ENCODE measurements at regions of chr1 and their contacts with region 1.

Region 1: GRCh38 chr1:112011215-112011614 is 21.7 kb upstream of the KCND3 start:
- DNase-seq: peak; percentile 76
- H3K4me3 ChIP-seq: no peak overlapping the region
- H3K27ac ChIP-seq: no peak overlapping the region
- H3K4me1 ChIP-seq: peaks cover 0 to 28% (median 12%) of the 10 kb centered on the region in 4 donors
- H3K27me3 ChIP-seq: no peaks in the 10 kb centered on the region
- CTCF ChIP-seq: no peak
- EP300 ChIP-seq: no peak
- POLR2A ChIP-seq: no peak

Region 2: DNA sequence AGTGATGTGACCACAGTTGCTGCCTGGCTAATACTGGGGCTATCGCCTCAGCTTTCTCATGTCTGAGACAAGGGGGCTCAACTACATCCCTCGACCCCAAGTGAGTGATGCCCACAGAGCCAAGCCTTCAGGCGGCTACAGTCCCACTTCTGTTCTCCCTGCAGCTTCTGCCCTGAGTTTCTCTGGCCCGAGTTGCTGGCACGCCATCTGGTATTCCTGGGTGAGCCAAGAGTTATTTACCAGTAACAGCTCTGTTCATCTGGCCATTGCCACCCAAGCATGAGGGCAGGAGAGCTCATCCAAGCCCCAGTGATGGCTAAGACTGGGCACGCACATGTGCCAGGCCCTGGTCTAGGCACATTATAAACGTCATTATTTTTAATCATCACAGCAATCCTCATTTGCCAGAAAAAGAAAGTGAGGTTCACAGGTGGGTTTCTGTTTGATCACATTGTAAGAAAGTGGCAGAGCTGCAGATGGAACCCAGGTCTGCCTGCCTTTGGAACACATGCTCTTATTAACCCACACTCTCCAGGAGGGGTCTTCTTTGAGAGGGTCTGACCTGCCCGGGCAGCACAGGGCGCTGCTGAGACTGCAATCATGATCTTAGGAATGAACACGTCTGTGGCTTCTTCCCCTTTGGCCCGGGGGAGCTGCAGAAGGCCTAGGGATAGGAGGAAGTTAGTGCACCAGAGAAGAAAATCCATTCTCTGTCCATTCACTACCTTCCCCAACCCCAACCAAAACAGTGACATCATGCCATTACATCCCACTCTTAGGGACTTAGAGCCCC is 49.2 kb before region 1 on chr1:
- intact Hi-C with region 1: loop called (anchors 1 kb)
- DNase-seq: no peak
- H3K4me3 ChIP-seq: no peak overlapping the region
- H3K27ac ChIP-seq: peak overlapping the region in 2 of 4 donors; percentile 23 to 43
- H3K4me1 ChIP-seq: peaks cover 0 to 53% (median 34%) of the 10 kb centered on the region in 4 donors
- H3K27me3 ChIP-seq: no peaks in the 10 kb centered on the region
- CTCF ChIP-seq: no peak
- EP300 ChIP-seq: no peak
- POLR2A ChIP-seq: no peak

Region 3: DNA sequence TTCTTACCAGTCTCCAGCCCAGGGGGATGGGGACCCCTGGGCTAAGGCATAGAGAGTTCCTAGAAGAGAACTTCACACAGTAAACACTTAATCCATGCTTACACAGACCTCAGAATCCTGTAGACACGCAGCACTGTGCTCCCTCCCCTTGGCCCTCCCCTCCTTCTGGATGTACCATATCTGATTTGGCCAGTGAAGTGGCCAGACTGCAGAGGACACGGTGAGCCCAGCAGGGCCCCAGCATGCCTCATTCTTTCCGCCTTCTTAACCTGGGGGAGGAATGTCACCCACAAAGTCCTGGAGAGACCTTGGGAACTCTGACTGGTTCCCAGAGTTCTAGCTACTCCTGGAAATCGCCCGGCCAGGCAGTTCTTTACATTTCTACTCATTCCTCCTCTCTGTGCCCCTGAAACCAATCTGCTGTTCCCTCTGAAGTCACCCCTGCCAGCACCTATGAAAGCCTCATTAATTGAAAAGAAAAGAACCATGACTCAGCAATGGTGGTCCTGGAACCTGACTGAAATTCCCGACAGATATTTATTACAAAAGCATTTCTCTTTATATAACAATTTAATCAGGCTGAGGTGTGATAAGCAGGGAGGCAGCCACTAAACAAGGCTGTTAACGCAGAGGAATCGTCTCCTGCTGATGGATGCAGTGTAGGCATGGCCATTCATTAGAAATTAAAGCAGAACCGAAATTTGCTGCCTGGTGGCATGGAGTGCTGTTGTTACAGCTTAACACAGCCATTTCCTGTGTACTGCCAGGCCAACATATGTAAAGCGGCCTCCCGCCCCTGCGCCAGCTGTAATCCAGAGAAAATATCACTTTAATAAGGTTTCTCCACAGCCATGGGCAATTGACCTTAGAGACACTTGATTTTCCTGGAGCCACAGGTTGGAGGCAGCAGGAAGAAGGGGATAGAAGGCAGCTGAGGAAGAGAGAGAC is 52.8 kb after region 1 on chr1:
- intact Hi-C with region 1: no loop called
- DNase-seq: no peak
- H3K4me3 ChIP-seq: no peak overlapping the region
- H3K27ac ChIP-seq: no peak overlapping the region
- H3K4me1 ChIP-seq: no peaks in the 10 kb centered on the region
- H3K27me3 ChIP-seq: no peaks in the 10 kb centered on the region
- CTCF ChIP-seq: no peak
- EP300 ChIP-seq: no peak
- POLR2A ChIP-seq: no peak

Region 4: DNA sequence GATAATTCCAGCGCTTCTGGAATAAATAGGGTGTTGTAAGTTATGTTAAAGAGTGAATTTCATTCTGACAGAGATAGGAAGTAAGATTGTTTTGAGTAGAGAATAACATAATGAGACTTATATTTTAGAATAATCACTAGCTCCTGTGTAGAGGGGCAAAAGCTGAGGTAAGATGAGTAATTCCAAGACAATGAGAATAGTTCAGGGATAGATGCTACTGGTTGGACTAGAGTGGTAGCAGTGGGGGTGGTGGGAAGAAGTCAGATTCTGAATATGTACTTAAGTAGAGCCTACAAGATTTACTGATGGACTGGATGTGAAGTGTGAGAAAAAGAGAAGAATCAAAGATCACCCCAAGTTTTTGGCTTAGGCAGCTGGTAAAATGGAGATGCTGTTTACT is 640.0 kb after region 1 on chr1:
- intact Hi-C with region 1: no loop called
- DNase-seq: no peak
- H3K4me3 ChIP-seq: no peak overlapping the region
- H3K27ac ChIP-seq: no peak overlapping the region
- H3K4me1 ChIP-seq: no peaks in the 10 kb centered on the region
- H3K27me3 ChIP-seq: no peaks in the 10 kb centered on the region
- CTCF ChIP-seq: no peak
- EP300 ChIP-seq: no peak
- POLR2A ChIP-seq: no peak

Measured in sigmoid colon (tissue), 7 donors.